Caco-2 (cell line): ENCODE measurements at regions of chr1 and their contacts with region 1.

Region 1: DNA sequence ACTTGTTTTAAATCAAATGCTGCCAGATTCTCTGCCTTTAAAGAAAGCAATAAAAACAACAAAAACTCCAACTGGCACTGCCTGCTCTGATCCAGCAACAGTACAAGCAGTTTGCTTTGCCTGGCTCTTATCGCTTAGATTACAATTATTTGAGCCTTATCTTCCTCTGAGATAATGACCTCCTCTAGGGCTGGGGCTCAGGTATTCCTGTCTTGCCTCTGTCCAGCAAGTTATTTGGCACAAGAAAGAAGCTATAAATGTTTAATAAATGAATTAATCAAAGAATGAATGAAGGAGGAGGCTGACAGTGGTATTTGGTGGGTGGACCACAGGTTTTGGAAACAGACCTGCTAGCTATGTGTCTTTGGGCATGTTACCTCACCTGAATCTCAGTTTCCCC is 6.7 kb upstream of the SLC2A1 start:
- DNase-seq: peak in 1 of 2 experiments; percentile 59
- H3K4me3 ChIP-seq: no peak overlapping the region
- H3K4me3 Mint-ChIP-seq: no peak overlapping the region
- H3K27ac Mint-ChIP-seq: no peak overlapping the region
- H3K4me1 ChIP-seq: peaks cover 63% of the 10 kb centered on the region
- H3K4me1 Mint-ChIP-seq: peaks cover 35% of the 10 kb centered on the region
- H3K27me3 ChIP-seq: no peaks in the 10 kb centered on the region
- H3K27me3 Mint-ChIP-seq: no peaks in the 10 kb centered on the region
- CTCF ChIP-seq: no peak

Region 2: GRCh38 chr1:43018121-43018520 is 52.7 kb after region 1 on chr1:
- CTCF ChIA-PET with region 1: no interaction called
- POLR2A ChIA-PET with region 1: no interaction called
- intact Hi-C with region 1: loop called (anchors 1 kb)
- DNase-seq: peak; percentile 78 to 82
- H3K4me3 ChIP-seq: no peak overlapping the region
- H3K4me3 Mint-ChIP-seq: peak overlapping the region; percentile 7
- H3K27ac Mint-ChIP-seq: peak overlapping the region; percentile 63
- H3K4me1 ChIP-seq: peaks cover 39% of the 10 kb centered on the region
- H3K4me1 Mint-ChIP-seq: peaks cover 29% of the 10 kb centered on the region
- H3K27me3 ChIP-seq: no peaks in the 10 kb centered on the region
- H3K27me3 Mint-ChIP-seq: no peaks in the 10 kb centered on the region
- CTCF ChIP-seq: no peak